Activated CD4-positive, alpha-beta T cell treated with anti-CD3 and anti-CD28 coated beads for 36 hours (primary cell): ENCODE measurements at regions of chr7 and their contacts with region 1.

Region 1: DNA sequence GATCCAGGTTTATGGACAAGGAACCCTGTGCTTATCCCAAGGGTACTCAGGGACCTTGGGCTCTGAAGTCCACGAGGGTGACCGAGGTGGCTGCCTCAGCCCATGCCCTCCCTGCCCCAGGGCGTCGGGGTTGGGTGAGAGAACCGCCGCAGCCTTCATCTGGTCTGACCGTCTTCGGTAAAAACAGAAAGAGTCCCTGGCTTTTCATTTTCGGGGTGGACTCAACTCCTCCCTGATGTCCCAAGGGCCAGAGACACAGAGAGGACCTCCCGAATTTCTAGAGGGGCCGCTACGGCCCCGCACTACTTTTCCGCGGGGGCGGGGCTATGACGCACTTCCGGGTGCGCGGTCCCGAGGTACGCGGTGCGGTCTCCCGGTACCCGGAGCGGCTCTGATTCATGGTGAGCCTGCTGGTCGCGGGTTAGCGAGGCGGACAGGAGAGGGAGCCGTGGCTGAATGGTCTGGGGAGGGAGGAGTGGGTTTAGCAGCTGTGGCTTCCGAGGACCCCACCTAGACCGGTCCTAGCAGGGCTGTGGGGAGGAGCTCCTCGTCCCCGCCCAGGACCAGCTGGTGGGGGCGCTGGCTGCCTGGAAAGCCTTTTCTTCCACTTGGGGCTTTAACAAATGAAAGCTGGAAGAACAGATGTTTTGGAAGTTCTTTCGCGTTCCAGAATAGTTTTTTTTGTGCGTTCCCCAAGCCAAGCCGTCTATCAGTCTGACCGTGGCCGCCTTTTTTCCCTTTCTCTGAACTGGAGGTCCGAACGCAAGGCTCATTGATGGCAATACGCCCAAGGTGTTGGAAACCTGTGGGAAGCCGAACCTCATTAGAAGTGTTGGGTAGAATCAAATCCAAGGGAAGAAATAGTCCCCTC is at the start of gene ZSCAN21:
- DNase-seq: peak; percentile 89
- ATAC-seq: peak; percentile 90
- H3K4me3 Mint-ChIP-seq: peak within 1 kb of the TSS; percentile 85
- H3K27ac Mint-ChIP-seq: peak within 1 kb of the TSS; percentile 86
- H3K4me1 Mint-ChIP-seq: peaks cover 17% of the 10 kb centered on the region
- H3K27me3 Mint-ChIP-seq: no peaks in the 10 kb centered on the region
- total RNA-seq, gene ZSCAN21: 6.4 to 7.4 TPM

Region 2: GRCh38 chr7:99910976-99911375 is 138.7 kb before region 1 on chr7:
- CTCF ChIA-PET with region 1: interaction called, 12 read pairs
- POLR2A ChIA-PET with region 1: no interaction called
- intact Hi-C with region 1: loop called in 1 of 2 experiments (anchors 2 kb)
- DNase-seq: no peak
- ATAC-seq: no peak
- H3K4me3 Mint-ChIP-seq: no peak overlapping the region
- H3K27ac Mint-ChIP-seq: peak overlapping the region; percentile 43
- H3K4me1 Mint-ChIP-seq: peaks cover 30% of the 10 kb centered on the region
- H3K27me3 Mint-ChIP-seq: no peaks in the 10 kb centered on the region

Region 3: DNA sequence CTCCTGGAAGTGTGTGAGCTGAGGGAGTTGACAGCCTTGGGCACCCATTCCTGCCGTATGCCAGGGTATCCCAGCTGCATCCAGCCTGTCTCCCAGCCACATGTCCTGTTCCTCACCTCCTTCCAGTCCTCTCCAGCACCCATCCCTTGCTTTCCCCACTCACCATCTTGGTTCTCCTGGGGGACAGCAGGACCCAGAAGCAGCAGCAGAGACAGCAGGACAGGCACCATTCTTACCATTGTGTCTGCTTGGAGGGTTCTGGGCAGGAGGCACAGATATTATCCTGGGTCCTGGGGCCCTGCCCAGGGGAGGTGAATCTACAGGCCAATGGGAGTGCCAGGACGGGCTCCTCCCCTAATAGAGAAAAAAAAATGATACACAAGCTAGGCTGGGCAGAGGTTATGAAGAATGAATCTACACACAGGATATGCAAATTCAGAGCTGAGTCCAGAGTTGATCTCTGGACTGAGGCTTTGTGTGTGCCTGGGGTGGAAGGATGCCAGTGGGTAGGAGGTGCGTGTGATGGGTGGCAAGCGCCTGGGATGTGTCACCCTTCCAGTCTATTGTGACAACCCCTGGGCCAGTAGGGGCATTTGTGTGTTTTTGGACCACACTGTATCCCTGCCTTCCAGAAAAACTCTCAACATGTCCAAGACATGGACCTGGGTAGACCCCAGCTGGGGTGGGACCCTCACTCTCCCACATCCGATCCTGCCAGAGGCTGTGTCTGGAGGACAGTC is 73.7 kb before region 1 on chr7 and contains the start of gene AZGP1:
- CTCF ChIA-PET with region 1: interaction called, 4 read pairs
- POLR2A ChIA-PET with region 1: no interaction called
- intact Hi-C with region 1: loop called in 1 of 2 experiments (anchors 5 kb)
- DNase-seq: no peak
- ATAC-seq: no peak
- H3K4me3 Mint-ChIP-seq: no peak within 1 kb of the TSS
- H3K27ac Mint-ChIP-seq: no peak within 1 kb of the TSS
- H3K4me1 Mint-ChIP-seq: peaks cover 12% of the 10 kb centered on the region
- H3K27me3 Mint-ChIP-seq: peaks cover 4% of the 10 kb centered on the region
- total RNA-seq, gene AZGP1: not detected

Region 4: DNA sequence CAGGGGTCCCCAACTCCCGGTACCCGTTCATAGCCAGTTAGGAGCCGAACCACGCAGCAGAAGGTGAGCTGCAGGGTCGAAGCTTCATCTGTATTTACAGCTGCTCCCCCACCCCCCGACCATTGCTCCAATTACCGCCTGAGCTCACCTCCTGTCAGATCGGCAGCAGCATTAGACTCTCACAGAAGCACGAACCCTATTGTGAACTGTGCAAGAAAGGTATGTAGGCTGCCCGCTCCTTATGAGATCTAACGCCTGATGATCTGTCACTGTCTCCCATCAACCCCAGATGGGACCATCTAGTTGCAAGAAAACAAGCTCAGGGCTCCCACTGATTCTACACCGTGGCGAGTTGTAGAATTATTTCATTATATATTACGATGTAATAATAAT is 59.2 kb before region 1 on chr7:
- CTCF ChIA-PET with region 1: interaction called, 22 read pairs
- POLR2A ChIA-PET with region 1: no interaction called
- intact Hi-C with region 1: loop called (anchors 1 to 2 kb)
- DNase-seq: no peak
- ATAC-seq: no peak
- H3K4me3 Mint-ChIP-seq: no peak overlapping the region
- H3K27ac Mint-ChIP-seq: no peak overlapping the region
- H3K4me1 Mint-ChIP-seq: no peaks in the 10 kb centered on the region
- H3K27me3 Mint-ChIP-seq: peaks cover 7% of the 10 kb centered on the region

Region 5: GRCh38 chr7:99997545-99998137 is 52.0 kb before region 1 on chr7:
- CTCF ChIA-PET with region 1: interaction called, 22 read pairs
- POLR2A ChIA-PET with region 1: no interaction called
- intact Hi-C with region 1: loop called (anchors 1 to 2 kb)
- DNase-seq: peak; percentile 81
- ATAC-seq: peak; percentile 87
- H3K4me3 Mint-ChIP-seq: peak overlapping the region; percentile 67
- H3K27ac Mint-ChIP-seq: peak overlapping the region; percentile 89
- H3K4me1 Mint-ChIP-seq: peaks cover 15% of the 10 kb centered on the region
- H3K27me3 Mint-ChIP-seq: peaks cover 1% of the 10 kb centered on the region

Region 6: GRCh38 chr7:100101016-100101862 is 51.6 kb after region 1 on chr7 and contains the starts of genes AP4M1 and MCM7:
- CTCF ChIA-PET with region 1: no interaction called
- POLR2A ChIA-PET with region 1: no interaction called
- intact Hi-C with region 1: loop called in 1 of 2 experiments (anchors 1 kb)
- DNase-seq: peak; percentile 99
- ATAC-seq: peak; percentile 91
- H3K4me3 Mint-ChIP-seq: peak within 1 kb of the TSS; percentile 90
- H3K27ac Mint-ChIP-seq: peak within 1 kb of the TSS; percentile 94
- H3K4me1 Mint-ChIP-seq: peaks cover 41% of the 10 kb centered on the region
- H3K27me3 Mint-ChIP-seq: no peaks in the 10 kb centered on the region
- total RNA-seq, gene AP4M1: 8.8 to 10.4 TPM
- total RNA-seq, gene MCM7: 411 to 429 TPM